Head of caudate nucleus (tissue), 42 donors: ENCODE measurements at regions of chr17 and their contacts with region 1.

Region 1: GRCh38 chr17:56833809-56834379 is at the starts of genes C17orf67 and DGKE:
- DNase-seq: peak; percentile 89 to 99 (median 97)

Region 2: GRCh38 chr17:56125830-56126819 is 707.8 kb before region 1 on chr17:
- intact Hi-C with region 1: no loop called
- DNase-seq: peak in 24 of 42 donors; percentile 3 to 73 (median 30)

Region 3: DNA sequence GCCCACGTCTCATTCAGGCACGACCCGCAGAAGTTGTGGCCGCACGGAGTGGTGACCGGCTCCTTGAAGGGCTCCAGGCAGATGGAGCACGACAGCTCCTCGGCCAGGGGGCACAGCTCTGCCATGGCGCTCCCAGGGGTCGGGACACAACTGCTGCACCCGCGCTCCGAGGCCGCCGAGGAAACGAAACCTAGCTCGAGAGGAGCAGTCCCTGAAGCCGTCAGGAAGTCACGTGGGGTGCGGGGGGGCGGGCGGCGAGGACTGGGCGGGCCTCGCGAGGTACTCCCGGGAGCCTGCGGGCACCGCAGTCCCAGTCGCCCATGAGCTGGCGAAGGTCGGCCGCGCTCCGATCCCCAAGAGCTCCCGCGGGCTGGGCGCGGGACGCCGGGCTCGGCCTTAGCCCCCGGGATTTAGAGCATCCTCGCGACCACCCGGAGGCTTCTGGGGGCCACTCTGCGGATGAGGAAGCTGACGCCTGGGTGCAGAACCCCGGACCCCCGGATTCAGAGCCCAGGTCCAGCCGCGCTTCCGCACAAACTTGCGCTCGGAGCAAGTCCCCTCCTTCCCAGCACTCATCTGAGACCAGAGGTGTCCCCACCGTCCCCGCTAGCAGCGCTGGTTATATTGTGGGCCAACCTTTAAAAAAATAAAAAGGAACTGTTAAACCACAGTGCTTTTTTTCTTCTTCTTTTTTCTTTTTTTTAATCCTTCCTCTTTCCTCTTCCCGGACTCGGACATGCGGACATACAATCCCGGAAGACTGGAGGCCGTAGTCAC is 80.2 kb after region 1 on chr17 and contains the start of gene TRIM25:
- intact Hi-C with region 1: loop called (anchors 5 kb)
- DNase-seq: peak; percentile 63 to 93 (median 83)

Region 4: DNA sequence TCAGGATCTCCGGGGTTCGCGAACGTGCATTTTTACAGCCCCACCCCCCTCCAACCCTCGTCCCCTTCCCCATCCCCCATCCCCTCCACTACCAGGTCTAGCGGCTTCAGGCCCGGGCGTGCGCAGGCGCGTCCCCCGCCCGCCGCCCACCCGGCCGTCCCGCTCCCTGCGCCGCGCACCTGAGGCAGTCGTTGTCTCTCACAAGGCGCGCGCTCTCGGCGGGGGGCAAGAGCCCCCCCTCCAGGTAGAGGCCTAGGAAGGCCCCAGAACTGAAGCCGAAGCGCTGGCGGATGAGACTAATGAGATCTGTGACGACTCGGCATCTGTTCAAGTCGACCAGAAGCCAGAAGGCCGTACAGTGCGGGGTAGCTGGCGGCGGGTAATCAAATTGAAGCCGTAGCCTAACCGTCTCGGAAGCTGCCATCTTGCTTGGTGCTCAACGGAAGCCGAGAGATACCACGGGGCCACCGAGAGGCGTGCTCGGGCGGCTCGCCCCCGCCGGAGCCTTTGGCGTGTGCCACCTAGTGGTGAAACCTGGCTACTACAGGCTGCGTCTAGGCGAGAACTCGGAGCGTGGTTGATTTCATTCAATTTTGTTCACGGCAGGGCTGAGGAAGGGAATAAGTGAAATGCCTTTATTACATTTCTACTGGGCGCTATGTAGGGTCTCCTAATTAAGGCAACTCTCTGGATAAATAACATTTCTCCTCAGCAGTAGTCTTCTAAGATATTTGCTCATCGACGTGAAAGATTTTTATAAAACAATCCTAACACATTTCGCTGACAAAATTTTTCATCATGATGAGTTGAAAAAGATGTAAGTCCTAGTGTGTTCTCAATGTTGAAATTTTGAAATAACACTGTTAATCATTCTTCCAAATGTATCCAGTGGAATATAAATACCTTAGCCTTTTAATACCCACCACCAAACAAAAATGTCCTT is 127.0 kb after region 1 on chr17 and contains the start of gene COIL:
- intact Hi-C with region 1: loop called (anchors 10 kb)
- DNase-seq: peak; percentile 88 to 98 (median 96)